AG04450 (cell line): ENCODE measurements at regions of chr1 and their contacts with region 1.

Region 1: DNA sequence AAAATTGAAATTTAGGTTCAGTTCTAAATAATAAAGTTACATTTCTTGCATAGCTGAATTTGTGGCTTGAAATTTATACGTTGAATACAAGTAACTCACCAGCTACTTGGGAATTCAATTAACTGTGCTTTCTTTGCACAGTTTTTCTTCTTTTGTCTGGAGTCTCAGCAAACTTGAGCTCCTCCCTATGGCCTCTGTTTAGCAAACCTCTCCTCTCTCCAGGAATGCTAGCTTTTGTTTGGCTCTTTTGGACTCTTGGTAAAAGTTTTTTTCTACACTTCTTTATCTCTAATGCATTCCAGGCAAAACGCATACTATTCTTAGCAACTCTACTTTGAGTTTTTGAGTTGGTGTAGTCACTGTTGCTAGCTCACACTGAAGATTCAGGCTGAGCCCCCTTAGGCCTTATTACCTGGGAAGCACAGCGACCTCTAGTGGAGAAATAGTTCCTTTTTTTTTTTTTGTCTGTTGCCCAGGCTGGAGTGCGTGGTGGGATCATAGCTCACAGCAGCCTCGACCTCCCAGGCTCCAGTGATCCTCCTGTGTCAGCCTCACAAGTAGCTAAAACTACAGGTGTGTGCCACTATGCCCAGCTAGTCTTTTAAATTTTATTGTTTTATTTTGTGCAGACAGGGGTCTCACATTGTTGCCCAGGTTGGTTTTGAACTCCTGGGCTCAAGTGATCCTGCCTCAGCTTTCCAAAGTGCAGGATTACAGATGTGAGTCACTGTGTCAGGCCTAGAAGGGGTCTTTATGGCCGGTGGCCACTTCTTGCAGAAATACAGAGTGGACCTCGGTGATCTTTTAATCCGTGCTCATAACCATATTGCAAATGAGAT is 61.7 kb downstream of the CASQ2 start:
- DNase-seq: peak; percentile 26
- H3K4me3 ChIP-seq: no peak overlapping the region
- H3K27ac ChIP-seq: no peak overlapping the region
- H3K27me3 ChIP-seq: peaks cover 9% of the 10 kb centered on the region
- CTCF ChIP-seq: peak; percentile 74

Region 2: GRCh38 chr1:115492880-115493279 is 213.9 kb before region 1 on chr1:
- CTCF ChIA-PET with region 1: no interaction called
- POLR2A ChIA-PET with region 1: no interaction called
- DNase-seq: no peak
- H3K4me3 ChIP-seq: no peak overlapping the region
- H3K27ac ChIP-seq: peak overlapping the region; percentile 25
- H3K27me3 ChIP-seq: no peaks in the 10 kb centered on the region
- CTCF ChIP-seq: no peak

Region 3: GRCh38 chr1:115648717-115649691 is 57.8 kb before region 1 on chr1:
- CTCF ChIA-PET with region 1: interaction called, 35 read pairs
- POLR2A ChIA-PET with region 1: no interaction called
- DNase-seq: no peak
- H3K4me3 ChIP-seq: no peak overlapping the region
- H3K27ac ChIP-seq: no peak overlapping the region
- H3K27me3 ChIP-seq: no peaks in the 10 kb centered on the region
- CTCF ChIP-seq: no peak

Region 4: DNA sequence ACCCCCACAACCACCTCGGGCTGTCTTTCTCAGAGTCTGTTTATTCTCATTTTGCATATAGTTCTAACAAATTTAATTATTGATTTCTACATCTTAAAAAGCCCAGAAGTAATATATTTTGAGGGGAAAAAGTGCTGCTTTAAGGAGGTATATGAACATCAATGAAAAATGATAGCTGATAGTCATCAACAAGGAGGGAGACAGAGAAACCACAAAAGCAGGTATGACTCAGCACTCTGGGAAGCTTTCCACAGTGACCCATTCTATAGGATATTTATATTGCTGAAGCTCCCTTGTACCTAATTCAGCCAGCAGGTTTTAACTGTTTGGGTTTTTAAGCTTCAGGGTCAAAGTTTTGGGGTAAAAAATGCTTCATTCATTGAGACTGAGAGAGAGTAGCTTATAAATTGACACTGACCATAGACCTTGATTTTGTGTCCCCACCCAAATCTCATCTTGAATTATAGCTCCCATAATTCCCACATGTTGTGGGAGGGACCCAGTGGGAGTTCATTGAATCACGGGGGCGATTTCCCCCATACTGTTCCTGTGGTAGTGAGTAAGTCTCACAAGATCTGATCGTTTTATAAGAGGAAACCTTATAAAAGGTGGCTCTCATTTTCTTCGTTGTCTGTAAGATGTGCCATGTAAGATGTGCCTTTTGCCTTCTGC is 37.7 kb before region 1 on chr1:
- CTCF ChIA-PET with region 1: interaction called, 48 read pairs
- POLR2A ChIA-PET with region 1: interaction called, 3 read pairs
- DNase-seq: peak; percentile 73
- H3K4me3 ChIP-seq: no peak overlapping the region
- H3K27ac ChIP-seq: peak overlapping the region; percentile 73
- H3K27me3 ChIP-seq: no peaks in the 10 kb centered on the region
- CTCF ChIP-seq: no peak

Region 5: DNA sequence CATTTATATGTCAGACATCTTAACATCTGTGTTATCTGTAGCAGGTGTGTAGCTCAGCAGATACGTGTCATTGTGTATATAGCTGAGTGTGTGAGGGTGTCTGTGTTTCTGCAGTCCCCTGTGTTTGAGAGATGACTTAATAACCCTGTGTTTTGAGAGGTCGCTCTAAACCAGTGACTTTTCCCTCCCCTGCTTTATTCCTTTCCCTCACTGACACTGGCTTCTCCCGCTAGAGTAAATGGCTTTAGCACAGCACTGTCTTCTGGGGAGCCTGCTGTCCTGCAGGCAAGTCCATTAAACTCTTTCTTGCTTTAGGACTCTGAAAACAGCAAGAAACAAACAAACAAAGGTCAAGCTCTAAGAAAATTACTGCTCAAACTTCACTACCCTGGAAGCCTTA is 12.0 kb before region 1 on chr1:
- CTCF ChIA-PET with region 1: interaction called, 39 read pairs
- POLR2A ChIA-PET with region 1: no interaction called
- DNase-seq: no peak
- H3K4me3 ChIP-seq: no peak overlapping the region
- H3K27ac ChIP-seq: no peak overlapping the region
- H3K27me3 ChIP-seq: peaks cover 3% of the 10 kb centered on the region
- CTCF ChIP-seq: no peak

Region 6: DNA sequence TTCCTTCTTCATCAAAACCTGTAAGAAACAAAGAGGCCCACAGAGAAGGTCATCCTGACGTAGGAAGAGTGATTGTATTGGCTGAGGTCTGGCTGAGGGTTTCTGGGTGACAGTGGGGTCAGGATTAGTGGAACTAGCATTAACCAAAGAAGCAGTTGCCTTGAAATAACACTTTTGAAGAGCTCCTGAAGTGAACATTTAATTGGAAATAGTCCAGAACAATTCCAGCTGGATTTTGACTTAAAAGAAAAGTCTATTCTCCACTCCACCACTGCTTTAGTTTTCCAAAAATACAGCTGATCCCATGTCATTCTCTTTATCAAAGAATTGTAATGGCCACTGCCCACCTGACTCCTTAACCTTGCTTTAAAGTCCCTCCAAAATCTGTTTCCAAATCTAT is 34.0 kb after region 1 on chr1:
- CTCF ChIA-PET with region 1: interaction called, 24 read pairs
- POLR2A ChIA-PET with region 1: interaction called, 4 read pairs
- DNase-seq: no peak
- H3K4me3 ChIP-seq: no peak overlapping the region
- H3K27ac ChIP-seq: no peak overlapping the region
- H3K27me3 ChIP-seq: peaks cover 4% of the 10 kb centered on the region
- CTCF ChIP-seq: no peak